A673 (cell line): ENCODE measurements at regions of chr3 and their contacts with region 1.

Region 1: GRCh38 chr3:58041654-58042324 is 33.6 kb downstream of the FLNB start:
- DNase-seq: no peak
- H3K4me3 ChIP-seq: no peak overlapping the region
- H3K27ac ChIP-seq: no peak overlapping the region
- H3K4me1 ChIP-seq: no peaks in the 10 kb centered on the region
- H3K27me3 ChIP-seq: no peaks in the 10 kb centered on the region
- CTCF ChIP-seq: no peak

Region 2: DNA sequence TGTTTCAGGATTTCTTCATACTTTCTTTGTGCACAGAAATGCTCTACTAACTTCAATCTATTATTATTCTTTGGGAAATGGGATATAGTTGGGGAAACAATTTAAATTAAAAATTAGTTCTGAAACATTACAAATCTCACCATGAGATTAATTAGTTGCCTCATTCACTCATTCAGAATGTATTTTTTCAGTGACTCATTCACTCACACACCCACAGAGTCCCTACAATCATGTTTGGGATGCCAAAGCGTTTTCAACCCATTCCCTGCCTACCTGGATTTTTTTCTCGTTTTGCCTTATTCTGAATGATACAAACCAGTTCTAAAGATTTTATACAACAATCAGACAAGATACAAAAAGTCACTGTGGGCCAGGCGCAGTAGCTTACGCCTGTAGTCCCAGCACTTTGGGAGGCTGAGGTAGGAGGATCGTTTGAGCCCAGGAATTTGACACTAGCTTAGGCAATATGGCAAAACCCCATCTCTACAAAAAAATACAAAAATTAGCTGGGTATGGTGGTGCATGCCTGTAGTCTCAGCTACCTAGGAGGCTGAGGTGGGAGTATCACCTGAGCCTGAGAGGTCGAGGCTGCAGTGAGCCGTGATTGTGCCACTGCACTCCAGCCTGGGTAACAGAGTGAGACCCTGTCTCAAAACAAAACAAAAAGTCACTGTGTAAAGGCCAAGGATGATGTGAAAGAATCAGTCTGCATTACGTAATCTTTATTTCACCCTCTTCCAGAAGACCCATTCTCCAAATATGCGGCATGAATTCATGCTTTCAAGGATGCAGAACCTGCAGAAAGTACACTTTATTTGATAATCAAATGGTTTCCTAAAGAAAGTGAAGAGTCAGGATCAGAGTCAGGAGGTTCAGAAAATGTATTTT is 1205.3 kb before region 1 on chr3:
- CTCF ChIA-PET with region 1: no interaction called
- POLR2A ChIA-PET with region 1: interaction called, 12 read pairs
- intact Hi-C with region 1: no loop called
- DNase-seq: no peak
- H3K4me3 ChIP-seq: no peak overlapping the region
- H3K27ac ChIP-seq: no peak overlapping the region
- H3K4me1 ChIP-seq: no peaks in the 10 kb centered on the region
- H3K27me3 ChIP-seq: no peaks in the 10 kb centered on the region
- CTCF ChIP-seq: no peak

Region 3: GRCh38 chr3:58104718-58105117 is 62.9 kb after region 1 on chr3:
- CTCF ChIA-PET with region 1: no interaction called
- POLR2A ChIA-PET with region 1: interaction called, 11 read pairs
- intact Hi-C with region 1: no loop called
- DNase-seq: no peak
- H3K4me3 ChIP-seq: no peak overlapping the region
- H3K27ac ChIP-seq: no peak overlapping the region
- H3K4me1 ChIP-seq: no peaks in the 10 kb centered on the region
- H3K27me3 ChIP-seq: no peaks in the 10 kb centered on the region
- CTCF ChIP-seq: no peak